Motor neuron (in vitro differentiated cells): ENCODE measurements at regions of chr3 and their contacts with region 1.

Region 1: GRCh38 chr3:46488735-46489361 is 8.9 kb upstream of the RTP3 start:
- ATAC-seq: peak; percentile 96 to 99 (median 96)
- H3K4me3 ChIP-seq: no peak overlapping the region
- H3K27ac ChIP-seq: no peak overlapping the region
- H3K4me1 ChIP-seq: peaks cover 0 to 4% of the 10 kb centered on the region in 2 donors

Region 2: DNA sequence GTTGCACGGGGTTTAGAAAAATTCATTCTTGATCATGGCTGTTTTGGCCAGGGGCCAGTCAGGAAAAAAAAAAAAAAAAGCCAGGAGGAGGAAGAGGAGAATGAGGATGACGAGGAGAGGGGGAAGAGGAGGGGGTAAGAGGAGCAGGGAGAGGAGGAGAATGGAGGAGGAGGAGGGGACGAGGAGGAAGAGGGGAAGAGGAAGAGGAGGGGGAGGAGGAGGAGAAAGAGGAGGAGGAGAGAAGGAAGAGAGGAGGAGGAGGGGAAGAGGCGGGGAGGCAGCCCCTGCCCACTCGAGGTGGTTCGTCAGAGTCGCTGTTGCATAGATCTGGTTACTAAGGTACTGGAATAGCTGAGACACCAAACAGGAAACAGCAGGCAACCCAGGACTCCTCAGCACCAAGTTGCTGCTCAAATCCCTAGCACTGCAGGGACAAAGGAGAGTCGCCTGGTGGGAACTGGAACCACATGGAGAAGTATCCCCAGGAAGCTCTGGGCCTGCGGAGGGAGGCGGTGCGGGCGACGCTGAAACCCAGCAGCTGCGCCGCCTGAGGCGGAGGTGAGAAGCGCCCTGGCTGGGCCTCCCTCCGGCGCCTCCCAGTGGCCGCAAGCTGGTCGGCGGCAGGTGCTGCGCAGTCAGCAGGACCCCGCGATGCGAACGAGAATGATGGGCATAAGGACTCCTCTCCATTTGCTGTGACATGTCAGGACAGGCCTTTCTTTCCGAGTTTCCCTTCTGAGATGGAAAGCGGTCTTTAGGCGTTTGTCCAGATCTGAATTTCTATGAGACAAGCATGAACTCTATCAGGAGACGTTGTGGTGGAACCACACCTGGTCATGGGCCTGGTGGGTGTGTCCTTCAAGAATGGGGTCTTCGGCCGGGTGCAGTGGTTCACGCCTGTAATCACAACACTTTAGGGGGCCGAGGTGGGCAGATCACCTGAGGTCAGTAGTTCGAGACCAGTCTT is 141.0 kb after region 1 on chr3:
- in situ Hi-C with region 1: loop called in 3 of 9 experiments (anchors 25 kb)
- ATAC-seq: peak; percentile 88 to 97 (median 92)
- H3K4me3 ChIP-seq: no peak overlapping the region
- H3K27ac ChIP-seq: no peak overlapping the region
- H3K4me1 ChIP-seq: peaks cover 0 to 15% of the 10 kb centered on the region in 2 donors

Region 3: GRCh38 chr3:46909535-46910442 is 420.9 kb after region 1 on chr3:
- in situ Hi-C with region 1: loop called in 1 of 9 experiments (anchors 25 kb)
- ATAC-seq: peak; percentile 83 to 96 (median 93)
- H3K4me3 ChIP-seq: no peak overlapping the region
- H3K27ac ChIP-seq: no peak overlapping the region
- H3K4me1 ChIP-seq: peaks cover 0 to 2% of the 10 kb centered on the region in 2 donors